Activated B cell treated with CpG ODN at 0.5 μM for 24 hours (primary cell): ENCODE measurements at regions of chr20 and their contacts with region 1.

Region 1: DNA sequence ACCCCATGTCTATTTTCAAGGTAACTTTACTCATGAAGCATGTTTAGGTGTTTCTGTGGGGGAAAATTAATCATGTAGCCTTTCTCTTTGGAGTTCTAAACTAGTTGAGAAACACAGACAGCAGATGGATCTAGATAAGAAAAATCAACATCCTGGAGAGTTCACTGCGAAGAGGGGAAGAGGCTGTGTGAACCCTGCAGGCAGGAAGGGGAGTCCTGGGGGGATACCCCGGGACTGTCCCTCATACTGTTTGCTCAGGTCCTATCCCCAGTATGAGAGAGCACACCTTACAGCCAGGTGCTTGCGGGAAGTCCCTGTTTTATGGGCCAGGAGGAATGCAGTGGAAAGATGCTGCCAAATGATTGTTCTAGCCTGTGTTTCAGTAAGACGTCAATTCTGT is 32.7 kb downstream of the CHMP4B start:
- DNase-seq: peak; percentile 22
- ATAC-seq: peak; percentile 97
- H3K4me3 Mint-ChIP-seq: peak overlapping the region; percentile 53
- H3K27ac Mint-ChIP-seq: peak overlapping the region; percentile 74
- H3K4me1 Mint-ChIP-seq: peaks cover 87% of the 10 kb centered on the region
- H3K27me3 Mint-ChIP-seq: no peaks in the 10 kb centered on the region
- CTCF ChIP-seq: no peak

Region 2: DNA sequence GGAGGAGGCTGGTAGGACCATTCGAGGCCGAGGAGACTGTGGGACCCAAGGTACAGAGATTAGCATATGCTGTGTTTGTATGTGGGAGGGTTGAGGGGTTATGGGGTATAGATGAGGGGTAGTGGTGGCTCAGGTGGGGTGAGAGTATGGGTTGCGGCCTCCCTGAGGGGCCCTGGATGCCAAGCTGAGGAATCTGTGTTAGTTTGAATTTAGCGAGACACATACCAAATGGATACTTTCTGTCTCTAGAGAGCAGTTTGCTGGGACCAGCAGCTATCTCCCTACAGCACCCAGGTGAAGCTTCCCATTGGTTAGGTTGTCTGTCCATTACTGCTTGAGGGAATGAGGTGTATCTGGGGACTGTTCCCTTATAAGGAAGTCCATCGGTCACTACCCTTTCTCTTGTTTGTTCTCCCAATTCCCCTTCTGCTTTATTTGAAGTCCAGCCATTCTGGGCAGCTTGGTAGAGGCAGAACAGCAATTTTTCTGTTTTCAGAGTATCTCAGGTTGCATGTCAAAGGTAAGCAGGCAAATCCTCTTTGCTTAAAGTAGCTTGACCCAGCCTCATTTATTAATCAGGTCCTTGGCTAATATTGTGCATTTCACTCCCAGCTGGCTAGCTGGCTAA is 17.5 kb before region 1 on chr20:
- CTCF ChIA-PET with region 1: no interaction called
- POLR2A ChIA-PET with region 1: no interaction called
- intact Hi-C with region 1: loop called (anchors 2 kb)
- DNase-seq: no peak
- ATAC-seq: no peak
- H3K4me3 Mint-ChIP-seq: no peak overlapping the region
- H3K27ac Mint-ChIP-seq: peak overlapping the region; percentile 32
- H3K4me1 Mint-ChIP-seq: peaks cover 80% of the 10 kb centered on the region
- H3K27me3 Mint-ChIP-seq: no peaks in the 10 kb centered on the region
- CTCF ChIP-seq: no peak